PC-9 (cell line): ENCODE measurements at regions of chr16 and their contacts with region 1.

Region 1: GRCh38 chr16:10368969-10369551 is 16.8 kb upstream of the ATF7IP2 start:
- DNase-seq: no peak
- H3K4me3 ChIP-seq: no peak overlapping the region
- H3K27ac ChIP-seq: no peak overlapping the region
- H3K4me1 ChIP-seq: no peaks in the 10 kb centered on the region
- H3K27me3 ChIP-seq: no peaks in the 10 kb centered on the region
- CTCF ChIP-seq: no peak

Region 2: DNA sequence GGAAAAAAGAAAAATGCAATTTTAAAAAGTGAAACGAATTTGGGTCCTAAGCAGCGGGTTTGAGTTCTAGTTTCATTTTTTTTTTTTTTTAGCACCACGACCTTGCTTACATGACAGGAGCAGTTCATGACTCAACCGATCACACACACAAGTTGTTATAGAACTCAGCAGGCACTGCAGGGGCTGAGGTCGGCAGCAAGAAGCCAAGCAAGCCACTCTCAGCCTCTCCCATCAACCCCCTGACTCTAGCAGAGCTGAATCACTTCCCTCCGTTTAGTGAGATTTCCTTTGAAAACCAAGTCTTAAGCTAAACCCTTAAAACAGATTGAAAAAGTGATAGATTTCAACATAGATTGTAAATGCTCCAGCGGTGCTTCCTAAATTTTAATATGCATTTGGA is 756.8 kb before region 1 on chr16:
- CTCF ChIA-PET with region 1: interaction called, 12 read pairs
- POLR2A ChIA-PET with region 1: no interaction called
- intact Hi-C with region 1: no loop called
- DNase-seq: no peak
- H3K4me3 ChIP-seq: no peak overlapping the region
- H3K27ac ChIP-seq: no peak overlapping the region
- H3K4me1 ChIP-seq: no peaks in the 10 kb centered on the region
- H3K27me3 ChIP-seq: peaks cover 13% of the 10 kb centered on the region; the same call in 1 of the 2 replicates
- CTCF ChIP-seq: no peak

Region 3: GRCh38 chr16:10385725-10386516 is 16.9 kb after region 1 on chr16 and contains the start of gene ATF7IP2:
- CTCF ChIA-PET with region 1: no interaction called
- POLR2A ChIA-PET with region 1: no interaction called
- intact Hi-C with region 1: no loop called
- DNase-seq: no peak
- H3K4me3 ChIP-seq: no peak within 1 kb of the TSS
- H3K27ac ChIP-seq: no peak within 1 kb of the TSS
- H3K4me1 ChIP-seq: no peaks in the 10 kb centered on the region
- H3K27me3 ChIP-seq: peaks cover 15% of the 10 kb centered on the region
- CTCF ChIP-seq: no peak
- total RNA-seq, gene ATF7IP2: not detected in 2 replicates

Region 4: DNA sequence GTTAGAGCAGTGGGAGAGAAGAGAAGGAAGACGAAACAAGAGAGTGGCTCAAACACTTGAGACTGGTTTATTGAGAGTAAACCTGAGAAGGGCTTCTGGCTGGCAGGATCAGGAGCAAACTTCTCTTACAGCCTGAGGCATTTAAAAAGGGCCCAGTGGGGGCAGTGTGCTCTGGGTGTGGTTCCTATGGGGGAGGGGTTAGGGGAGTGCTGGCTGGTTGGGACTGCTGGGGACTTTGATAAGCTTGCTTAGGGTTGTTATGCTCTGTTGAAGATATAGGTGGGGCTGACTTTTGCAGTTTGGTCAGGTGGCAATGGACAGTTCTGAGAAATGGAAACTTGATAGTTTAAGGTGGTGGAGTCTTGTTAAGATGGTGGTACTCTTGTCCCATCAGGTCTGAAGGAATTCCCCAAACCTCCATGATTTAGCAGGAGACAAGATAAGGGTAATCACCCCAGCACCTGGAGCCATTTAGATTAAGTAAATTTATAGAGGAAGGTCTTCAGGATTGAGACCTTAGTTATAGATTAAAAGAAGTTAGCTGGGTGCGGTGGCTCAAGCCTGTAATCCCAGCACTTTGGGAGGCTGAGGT is 132.1 kb after region 1 on chr16:
- CTCF ChIA-PET with region 1: no interaction called
- POLR2A ChIA-PET with region 1: no interaction called
- intact Hi-C with region 1: no loop called
- DNase-seq: no peak
- H3K4me3 ChIP-seq: no peak overlapping the region
- H3K27ac ChIP-seq: no peak overlapping the region
- H3K4me1 ChIP-seq: no peaks in the 10 kb centered on the region
- H3K27me3 ChIP-seq: no peaks in the 10 kb centered on the region
- CTCF ChIP-seq: no peak